Activated T-helper 1 cell treated with anti-CD3 and anti-CD28 coated beads, Interleukin-12 subunit alpha, Interleukin-12 subunit beta, Interleukin-2, Interleukin-4 antibody, amounts not matched to agents 30 ng/mL and 10 ng/mL and 1 ng/mL, durations not matched to agents 14 hours and 24 hours and 36 hours (primary cell): ENCODE measurements at regions of chr6 and their contacts with region 1.

Region 1: DNA sequence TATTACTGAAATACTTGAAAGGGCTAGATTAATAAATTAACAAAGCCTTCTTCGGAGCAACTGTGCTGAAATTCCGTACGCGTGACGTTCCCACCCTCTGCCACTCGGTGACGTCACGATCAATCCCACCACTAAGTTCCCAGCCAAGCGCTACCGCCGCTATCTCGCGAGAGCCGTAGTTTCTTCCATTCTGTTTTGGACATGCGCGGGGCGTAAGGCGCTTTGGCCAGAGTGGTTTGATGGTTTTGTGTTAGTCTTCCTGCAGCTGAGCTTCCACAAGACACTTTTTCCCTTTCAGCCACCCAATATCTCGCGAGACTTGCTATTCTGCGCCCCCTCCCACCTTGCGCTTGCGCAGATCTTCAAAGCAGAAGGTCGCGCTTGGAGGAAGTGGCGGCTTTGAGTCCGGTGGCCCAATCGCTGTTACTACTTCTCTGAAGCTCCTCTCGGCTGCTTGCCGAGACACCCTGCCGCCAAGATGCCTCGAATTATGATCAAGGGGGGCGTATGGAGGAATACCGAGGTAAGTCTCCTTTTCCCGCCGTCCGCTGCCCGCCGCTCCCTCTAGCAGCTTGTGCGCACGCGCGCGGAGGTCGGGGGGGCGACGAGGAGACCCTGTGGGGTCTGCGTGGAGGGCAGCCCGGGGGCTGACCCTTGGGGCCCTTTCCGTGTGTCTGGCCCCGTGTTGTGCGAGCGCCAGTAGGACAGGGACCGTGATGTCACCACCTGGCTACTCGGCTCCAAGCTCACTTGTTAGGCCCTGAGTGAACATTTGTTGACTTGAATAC is at the start of gene CDC5L:
- DNase-seq: peak; percentile 93
- H3K4me3 Mint-ChIP-seq: peak within 1 kb of the TSS; percentile 97
- H3K27ac Mint-ChIP-seq: peak within 1 kb of the TSS; percentile 99
- H3K4me1 Mint-ChIP-seq: peaks cover 40% of the 10 kb centered on the region
- H3K27me3 Mint-ChIP-seq: peaks cover 3% of the 10 kb centered on the region
- total RNA-seq, gene CDC5L: 28.1 and 28.4 TPM in 2 replicates

Region 2: DNA sequence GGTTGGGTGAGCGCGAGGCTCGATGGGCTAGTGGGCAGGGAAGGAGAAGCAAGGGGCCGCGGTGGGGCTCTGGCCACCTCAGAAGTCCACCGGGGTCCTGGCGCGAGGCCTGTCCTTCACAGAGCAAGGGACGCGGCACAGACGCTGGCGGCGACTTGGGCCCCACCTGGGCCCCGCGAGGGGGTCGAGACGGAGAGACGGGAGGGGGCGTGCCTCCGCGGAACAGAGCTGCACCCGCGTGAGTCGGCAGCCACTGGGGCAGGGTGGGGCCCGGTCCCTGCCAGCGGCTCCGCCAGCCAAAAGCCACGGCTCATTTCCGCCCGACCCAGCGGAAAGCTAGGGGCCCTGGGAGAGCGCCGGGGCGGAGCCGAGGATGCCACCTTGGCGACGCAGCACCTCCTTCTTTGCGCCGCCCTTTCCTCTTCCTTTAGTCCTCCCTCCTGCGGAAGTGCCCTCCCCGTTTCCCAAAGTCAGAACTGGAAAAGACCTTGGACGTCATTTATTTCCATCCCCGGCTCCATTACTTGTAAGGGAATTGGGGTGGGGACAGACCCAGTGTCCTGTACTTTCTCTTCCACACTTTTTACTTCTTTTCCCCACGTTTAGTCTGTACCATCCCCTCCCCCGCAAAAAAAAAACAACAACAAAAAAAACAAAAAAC is 1333.9 kb before region 1 on chr6 and contains the start of gene CUL7:
- intact Hi-C with region 1: loop called (anchors 5 kb)
- DNase-seq: peak; percentile 89
- H3K4me3 Mint-ChIP-seq: peak within 1 kb of the TSS; percentile 99
- H3K27ac Mint-ChIP-seq: peak within 1 kb of the TSS; percentile 98
- H3K4me1 Mint-ChIP-seq: peaks cover 53% of the 10 kb centered on the region
- H3K27me3 Mint-ChIP-seq: no peaks in the 10 kb centered on the region
- total RNA-seq, gene CUL7: 20.1 and 23.2 TPM in 2 replicates

Region 3: GRCh38 chr6:44246663-44247337 is 140.7 kb before region 1 on chr6 and contains the start of gene HSP90AB1:
- intact Hi-C with region 1: loop called (anchors 1 kb)
- DNase-seq: peak; percentile 96
- H3K4me3 Mint-ChIP-seq: peak within 1 kb of the TSS; percentile 96
- H3K27ac Mint-ChIP-seq: peak within 1 kb of the TSS; percentile 98
- H3K4me1 Mint-ChIP-seq: peaks cover 45% of the 10 kb centered on the region
- H3K27me3 Mint-ChIP-seq: peaks cover 5% of the 10 kb centered on the region
- total RNA-seq, gene HSP90AB1: 2,065 and 2,095 TPM in 2 replicates

Region 4: GRCh38 chr6:44312901-44313788 is 74.4 kb before region 1 on chr6 and contains the start of gene AARS2:
- intact Hi-C with region 1: loop called (anchors 1 kb)
- DNase-seq: peak; percentile 89
- H3K4me3 Mint-ChIP-seq: peak within 1 kb of the TSS; percentile 99
- H3K27ac Mint-ChIP-seq: peak within 1 kb of the TSS; percentile 94
- H3K4me1 Mint-ChIP-seq: peaks cover 18% of the 10 kb centered on the region
- H3K27me3 Mint-ChIP-seq: peaks cover 13% of the 10 kb centered on the region
- total RNA-seq, gene AARS2: 22.2 and 23.0 TPM in 2 replicates

Region 5: DNA sequence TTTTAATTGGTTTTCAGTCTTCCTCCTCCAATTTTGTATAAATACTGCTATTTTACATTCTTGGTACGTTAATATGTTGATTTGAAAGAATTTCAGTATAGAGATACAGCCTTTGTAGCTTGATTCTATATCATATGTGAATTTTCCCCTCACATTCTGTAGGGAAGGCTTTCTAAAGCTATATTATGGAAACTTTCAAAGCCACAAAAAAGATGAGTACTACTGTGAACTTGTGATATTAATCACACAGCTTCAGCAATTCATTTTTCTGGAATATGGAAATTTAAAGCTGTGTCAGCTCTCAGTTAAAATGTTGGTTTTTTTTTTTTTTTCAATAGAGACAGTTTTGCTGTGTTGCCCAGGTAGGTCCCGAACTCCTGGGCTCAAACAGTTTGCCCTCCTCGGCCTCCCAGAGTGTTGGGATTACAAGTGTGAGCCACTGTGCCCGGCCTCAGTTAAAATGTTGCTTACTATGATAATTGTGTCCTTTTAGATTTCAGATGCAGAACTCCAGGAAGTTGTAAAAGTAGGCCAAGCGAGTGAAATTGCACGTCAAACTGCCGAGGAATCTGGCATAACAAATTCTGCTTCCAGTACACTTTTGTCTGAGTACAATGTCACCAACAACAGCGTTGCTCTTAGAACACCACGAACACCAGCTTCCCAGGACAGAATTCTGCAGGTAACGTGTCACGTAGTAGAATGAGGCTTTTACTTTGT is 20.6 kb after region 1 on chr6:
- intact Hi-C with region 1: loop called (anchors 1 kb)
- DNase-seq: no peak
- H3K4me3 Mint-ChIP-seq: no peak overlapping the region
- H3K27ac Mint-ChIP-seq: peak overlapping the region; percentile 52
- H3K4me1 Mint-ChIP-seq: peaks cover 35% of the 10 kb centered on the region
- H3K27me3 Mint-ChIP-seq: no peaks in the 10 kb centered on the region

Region 6: DNA sequence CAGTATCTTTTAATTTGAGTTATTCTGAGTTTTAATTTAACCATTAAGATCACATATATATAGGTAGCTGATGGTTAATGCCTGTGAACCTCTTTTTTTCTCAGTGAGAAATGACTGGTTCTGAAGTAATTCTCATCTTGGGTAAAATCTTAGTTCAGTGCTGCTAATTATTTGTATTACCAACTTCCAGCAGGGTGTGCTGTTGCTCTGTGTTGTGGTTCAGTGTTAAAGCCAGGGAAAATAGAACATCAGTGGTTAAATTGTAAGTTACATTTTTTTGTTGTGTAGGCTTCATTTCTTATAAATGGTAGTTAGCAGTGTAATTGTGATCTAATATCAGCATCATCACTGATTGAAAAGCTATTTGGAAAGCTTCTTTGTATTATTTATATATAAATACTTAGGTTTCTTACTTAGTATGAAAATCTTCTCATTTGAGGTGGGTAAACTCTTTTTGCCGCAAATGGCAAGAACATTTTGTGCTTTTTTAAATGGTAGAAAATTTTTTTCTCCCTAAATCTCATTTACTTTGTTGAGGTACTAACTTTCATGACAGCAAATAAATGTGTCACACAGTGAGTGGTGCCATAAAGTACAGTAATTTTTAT is 43.7 kb after region 1 on chr6:
- intact Hi-C with region 1: no loop called
- DNase-seq: no peak
- H3K4me3 Mint-ChIP-seq: no peak overlapping the region
- H3K27ac Mint-ChIP-seq: no peak overlapping the region
- H3K4me1 Mint-ChIP-seq: peaks cover 8% of the 10 kb centered on the region
- H3K27me3 Mint-ChIP-seq: no peaks in the 10 kb centered on the region